T-cell (primary cell): ENCODE measurements at regions of chr2 and their contacts with region 1.

Region 1: GRCh38 chr2:181904022-181904632 is 12.6 kb downstream of the ITPRID2 start:
- DNase-seq: peak in 2 of 35 experiments; percentile 6 to 60
- ATAC-seq: peak in 2 of 4 experiments; percentile 42 to 57
- H3K4me3 ChIP-seq: no peak overlapping the region
- H3K4me3 Mint-ChIP-seq: no peak overlapping the region
- H3K27ac ChIP-seq: no peak overlapping the region
- H3K27ac Mint-ChIP-seq: no peak overlapping the region
- H3K4me1 ChIP-seq: peaks cover 0 to 5% of the 10 kb centered on the region in 2 experiments
- H3K4me1 Mint-ChIP-seq: peaks cover 20 to 28% (median 25%) of the 10 kb centered on the region in 3 donors
- H3K27me3 ChIP-seq: no peaks in the 10 kb centered on the region
- H3K27me3 Mint-ChIP-seq: no peaks in the 10 kb centered on the region

Region 2: DNA sequence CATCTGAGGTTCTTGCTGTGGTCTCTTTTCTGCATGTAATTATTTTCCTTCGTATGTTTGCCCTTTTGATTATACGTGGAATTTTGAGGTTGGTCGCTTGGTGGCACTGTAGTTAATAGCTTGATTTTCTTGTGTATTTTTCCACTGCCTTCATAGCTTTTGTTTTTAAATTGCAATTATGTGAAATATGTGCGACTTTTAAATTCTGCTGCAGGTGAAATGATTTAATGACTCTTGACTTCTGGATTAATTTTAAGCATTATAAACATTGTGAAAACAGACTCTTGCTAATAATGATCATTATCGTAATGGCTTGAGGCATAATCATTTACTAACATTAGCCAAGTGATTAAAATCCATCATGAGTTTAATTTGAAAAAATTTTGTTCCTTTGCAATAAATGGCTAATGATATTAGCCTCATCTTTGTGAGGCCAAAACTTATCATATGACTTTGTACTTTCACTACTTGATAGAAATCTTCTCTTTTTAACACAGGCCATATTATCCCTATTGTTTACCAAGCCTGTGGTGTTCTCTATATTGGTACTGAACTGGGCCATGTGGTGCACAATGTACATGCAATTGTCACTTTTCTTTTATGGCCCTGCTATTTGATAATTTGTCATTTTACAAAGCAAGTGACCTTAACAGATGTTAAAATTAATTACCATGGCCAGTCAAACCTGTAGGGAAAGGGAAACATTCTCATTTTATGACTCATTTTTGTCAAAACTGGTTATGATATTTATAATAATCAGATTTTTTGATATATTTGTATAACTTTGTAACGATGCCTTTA is 161.0 kb before region 1 on chr2:
- CTCF ChIA-PET with region 1: interaction called, 14 to 30 read pairs
- POLR2A ChIA-PET with region 1: no interaction called
- DNase-seq: peak in 16 of 35 experiments; percentile 1 to 60 (median 9)
- ATAC-seq: no peak
- H3K4me3 ChIP-seq: no peak overlapping the region
- H3K4me3 Mint-ChIP-seq: no peak overlapping the region
- H3K27ac ChIP-seq: no peak overlapping the region
- H3K27ac Mint-ChIP-seq: no peak overlapping the region
- H3K4me1 ChIP-seq: no peaks in the 10 kb centered on the region
- H3K4me1 Mint-ChIP-seq: no peaks in the 10 kb centered on the region
- H3K27me3 ChIP-seq: no peaks in the 10 kb centered on the region
- H3K27me3 Mint-ChIP-seq: peaks cover 0 to 2% of the 10 kb centered on the region in 2 donors

Region 3: GRCh38 chr2:183134016-183134415 is 1229.9 kb after region 1 on chr2:
- CTCF ChIA-PET with region 1: no interaction called
- POLR2A ChIA-PET with region 1: no interaction called
- DNase-seq: no peak
- ATAC-seq: no peak
- H3K4me3 ChIP-seq: no peak overlapping the region
- H3K4me3 Mint-ChIP-seq: no peak overlapping the region
- H3K27ac ChIP-seq: no peak overlapping the region
- H3K27ac Mint-ChIP-seq: no peak overlapping the region
- H3K4me1 ChIP-seq: no peaks in the 10 kb centered on the region
- H3K4me1 Mint-ChIP-seq: peaks cover 6 to 19% (median 17%) of the 10 kb centered on the region in 3 donors
- H3K27me3 ChIP-seq: no peaks in the 10 kb centered on the region
- H3K27me3 Mint-ChIP-seq: no peaks in the 10 kb centered on the region